GM13976 (cell line): ENCODE measurements at regions of chr10 and their contacts with region 1.

Region 1: DNA sequence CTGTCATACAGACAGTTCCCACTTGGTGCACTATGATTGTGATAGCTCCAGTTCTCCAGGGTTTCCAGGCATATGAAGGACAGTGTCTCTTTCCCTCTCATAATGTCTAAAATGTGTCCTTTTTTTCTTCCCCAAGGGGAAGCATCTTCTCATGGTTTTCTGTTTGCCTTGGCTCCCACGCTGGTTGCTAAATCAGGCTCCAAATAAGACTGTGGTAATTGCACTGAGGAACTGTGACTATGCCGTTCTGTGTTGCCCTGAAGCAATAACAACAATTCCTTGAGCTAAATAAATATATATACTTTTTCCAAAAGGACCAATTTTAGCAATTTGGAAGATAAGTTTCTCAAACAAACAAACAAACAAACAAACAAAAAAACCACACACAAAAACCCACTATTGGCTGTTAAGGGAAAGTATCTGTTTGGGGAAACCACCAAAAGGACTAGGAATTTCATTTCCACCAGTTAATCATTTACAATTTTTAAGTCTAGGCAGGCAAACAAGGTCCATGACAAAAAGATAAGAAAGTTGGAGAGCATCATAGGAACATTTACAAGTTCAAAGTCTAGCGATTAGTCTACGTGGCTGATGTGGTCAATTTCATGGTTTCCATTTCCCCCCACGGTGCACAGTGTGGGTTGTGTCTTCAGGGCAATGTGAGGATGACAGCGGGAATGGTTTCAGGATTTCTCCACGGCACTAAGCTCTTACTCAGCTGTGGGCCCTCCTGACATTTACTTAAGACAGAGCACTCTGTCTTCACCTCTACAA is 62.4 kb downstream of the THNSL1 start:
- DNase-seq: no peak
- CTCF ChIP-seq: no peak

Region 2: DNA sequence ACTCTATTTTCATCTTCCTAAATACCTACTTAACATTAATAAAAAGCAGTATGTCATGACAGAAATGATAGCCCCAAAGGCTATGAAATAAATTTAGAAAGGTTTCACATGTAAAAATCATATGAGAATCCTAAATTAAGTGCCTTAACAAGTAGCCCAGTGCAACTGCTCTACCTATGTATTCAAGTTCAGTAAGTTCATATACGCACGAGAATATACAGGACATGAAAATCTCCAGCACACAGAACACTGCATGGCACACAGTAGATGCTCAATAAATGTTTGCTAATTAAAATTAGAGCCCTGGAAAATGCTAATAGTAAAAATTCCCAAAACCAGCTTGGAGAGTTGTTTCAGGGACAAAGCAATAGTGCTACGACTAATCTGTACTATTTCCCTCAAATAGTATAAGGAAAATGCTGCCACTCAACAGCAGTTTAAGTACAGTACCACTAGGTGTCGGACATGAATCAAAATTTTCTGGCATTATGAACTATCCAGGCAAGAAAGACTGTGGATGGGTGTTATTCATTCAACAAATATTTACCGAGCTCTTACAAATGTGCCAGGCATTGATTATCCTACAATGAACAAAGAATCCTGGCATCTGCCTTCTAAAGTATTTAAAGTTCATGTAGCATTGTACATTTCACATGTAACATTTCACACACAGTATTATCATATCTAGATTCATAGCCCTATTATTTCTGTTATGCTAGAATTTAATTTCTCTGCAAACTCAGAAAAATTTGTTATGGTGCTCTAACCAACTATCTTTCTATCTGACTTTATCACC is 436.0 kb before region 1 on chr10:
- in situ Hi-C with region 1: loop called (anchors 10 kb)
- DNase-seq: peak; percentile 58
- CTCF ChIP-seq: peak; percentile 66